ENCODE measurements at regions of chr12 and their contacts with region 1.

Region 1: GRCh38 chr12:121240484-121241101 is 30.7 kb downstream of the P2RX4 start:
- DNase-seq: peak; percentile 84 to 99 (median 92)
- ATAC-seq: peak; percentile 92
- H3K4me3 ChIP-seq: peak overlapping the region; percentile 47
- H3K4me3 Mint-ChIP-seq: peak overlapping the region; percentile 90
- H3K27ac ChIP-seq: peak overlapping the region; percentile 86 to 88
- H3K27ac Mint-ChIP-seq: peak overlapping the region; percentile 100
- H3K4me1 ChIP-seq: peaks cover 45% of the 10 kb centered on the region
- H3K4me1 Mint-ChIP-seq: peaks cover 51% of the 10 kb centered on the region
- H3K27me3 ChIP-seq: no peaks in the 10 kb centered on the region
- H3K27me3 Mint-ChIP-seq: no peaks in the 10 kb centered on the region
- CTCF ChIP-seq: no peak

Region 2: DNA sequence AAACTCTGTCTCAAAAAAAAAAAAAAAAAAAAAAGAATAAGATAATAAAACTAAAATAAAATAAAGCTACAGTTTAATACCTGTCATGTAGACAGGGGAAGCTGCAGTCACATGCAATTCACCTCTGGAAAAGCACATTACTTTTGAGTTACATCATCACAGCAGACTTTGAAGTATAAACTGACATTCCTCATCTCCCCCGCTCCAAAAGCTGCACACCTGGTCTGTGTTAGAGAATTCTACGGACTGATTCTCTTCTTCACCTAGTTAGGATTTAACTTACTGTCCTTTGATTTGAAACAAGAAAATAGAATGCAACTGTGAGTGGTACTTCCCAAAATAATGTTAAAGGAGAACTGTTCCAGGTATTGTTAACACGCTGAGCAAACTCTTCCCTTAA is 361.5 kb before region 1 on chr12:
- CTCF ChIA-PET with region 1: no interaction called
- POLR2A ChIA-PET with region 1: no interaction called
- intact Hi-C with region 1: no loop called
- DNase-seq: no peak
- ATAC-seq: no peak
- H3K4me3 ChIP-seq: no peak overlapping the region
- H3K4me3 Mint-ChIP-seq: no peak overlapping the region
- H3K27ac ChIP-seq: no peak overlapping the region
- H3K27ac Mint-ChIP-seq: peak overlapping the region; percentile 13
- H3K4me1 ChIP-seq: peaks cover 4% of the 10 kb centered on the region
- H3K4me1 Mint-ChIP-seq: peaks cover 65% of the 10 kb centered on the region
- H3K27me3 ChIP-seq: no peaks in the 10 kb centered on the region
- H3K27me3 Mint-ChIP-seq: no peaks in the 10 kb centered on the region
- CTCF ChIP-seq: no peak

Region 3: DNA sequence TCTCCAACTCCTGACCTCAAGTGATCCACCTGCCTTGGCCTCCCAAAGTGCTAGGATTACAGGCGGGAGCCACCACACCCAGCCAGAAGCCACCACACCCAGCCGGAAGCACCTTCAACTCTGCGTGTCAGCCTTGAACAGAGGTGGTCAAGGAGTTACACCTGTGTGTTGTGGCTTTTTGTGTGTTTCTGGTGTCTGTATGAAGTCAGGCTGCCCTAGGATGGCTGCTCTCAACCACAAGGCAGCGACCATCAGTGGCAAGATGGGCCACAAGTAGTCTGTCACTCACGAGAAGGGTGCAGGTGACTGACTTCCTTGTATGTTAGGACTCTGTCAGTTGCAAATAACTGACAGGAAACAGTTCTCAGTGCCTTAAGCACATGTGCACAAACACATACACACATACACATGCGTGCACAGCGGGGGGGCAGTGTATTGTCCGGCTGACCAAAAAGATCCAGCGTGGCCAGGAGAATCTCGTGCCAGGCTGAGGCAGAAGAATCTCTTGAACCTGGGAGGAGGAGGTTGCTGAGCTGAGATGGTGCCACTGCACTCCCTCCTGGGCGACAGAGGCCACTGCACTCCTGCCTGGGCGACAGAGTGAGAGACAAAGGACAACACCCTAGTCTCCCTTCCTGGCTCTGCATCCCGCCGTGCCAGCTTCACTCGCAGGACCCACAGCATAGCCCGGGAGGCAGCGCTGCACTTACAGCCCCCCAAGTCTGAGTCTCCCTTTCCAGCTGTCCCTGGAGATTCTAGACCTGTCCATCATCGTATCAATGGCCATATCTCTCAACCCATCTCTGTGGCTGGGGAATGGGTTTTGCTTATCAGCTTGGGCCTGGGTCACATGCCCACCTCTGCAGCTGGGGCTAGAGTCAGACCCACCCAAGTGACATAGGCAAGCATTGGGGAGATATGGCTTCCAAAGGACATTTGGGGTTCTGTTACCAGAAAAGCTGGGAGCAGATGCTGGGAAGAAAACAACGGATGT is 17.0 kb before region 1 on chr12:
- CTCF ChIA-PET with region 1: interaction called, 3 read pairs
- POLR2A ChIA-PET with region 1: interaction called, 43 read pairs
- intact Hi-C with region 1: loop called in 1 of 2 experiments (anchors 2 kb)
- DNase-seq: peak in 10 of 14 experiments; percentile 23 to 72 (median 46)
- ATAC-seq: peak; percentile 53
- H3K4me3 ChIP-seq: no peak overlapping the region
- H3K4me3 Mint-ChIP-seq: peak overlapping the region; percentile 55
- H3K27ac ChIP-seq: peak overlapping the region; percentile 48 to 79
- H3K27ac Mint-ChIP-seq: peak overlapping the region; percentile 88
- H3K4me1 ChIP-seq: peaks cover 58% of the 10 kb centered on the region
- H3K4me1 Mint-ChIP-seq: peaks cover 47% of the 10 kb centered on the region
- H3K27me3 ChIP-seq: no peaks in the 10 kb centered on the region
- H3K27me3 Mint-ChIP-seq: no peaks in the 10 kb centered on the region
- CTCF ChIP-seq: no peak

Region 4: GRCh38 chr12:121230538-121230907 is 10.1 kb before region 1 on chr12:
- CTCF ChIA-PET with region 1: interaction called, 18 read pairs
- POLR2A ChIA-PET with region 1: interaction called, 8 read pairs
- intact Hi-C with region 1: loop called in 1 of 2 experiments (anchors 2 kb)
- DNase-seq: no peak
- ATAC-seq: no peak
- H3K4me3 ChIP-seq: no peak overlapping the region
- H3K4me3 Mint-ChIP-seq: no peak overlapping the region
- H3K27ac ChIP-seq: no peak overlapping the region
- H3K27ac Mint-ChIP-seq: peak overlapping the region; percentile 55
- H3K4me1 ChIP-seq: peaks cover 37% of the 10 kb centered on the region
- H3K4me1 Mint-ChIP-seq: peaks cover 22% of the 10 kb centered on the region
- H3K27me3 ChIP-seq: no peaks in the 10 kb centered on the region
- H3K27me3 Mint-ChIP-seq: no peaks in the 10 kb centered on the region
- CTCF ChIP-seq: no peak

Region 5: GRCh38 chr12:121296618-121297434 is 56.2 kb after region 1 on chr12 and contains the start of gene CAMKK2:
- CTCF ChIA-PET with region 1: no interaction called
- POLR2A ChIA-PET with region 1: interaction called, 11 read pairs
- intact Hi-C with region 1: loop called in 1 of 2 experiments (anchors 1 kb)
- DNase-seq: peak; percentile 73 to 96 (median 84)
- ATAC-seq: peak; percentile 88
- H3K4me3 ChIP-seq: peak within 1 kb of the TSS; percentile 83
- H3K4me3 Mint-ChIP-seq: peak within 1 kb of the TSS; percentile 92
- H3K27ac ChIP-seq: no peak within 1 kb of the TSS
- H3K27ac Mint-ChIP-seq: peak within 1 kb of the TSS; percentile 75
- H3K4me1 ChIP-seq: peaks cover 37% of the 10 kb centered on the region
- H3K4me1 Mint-ChIP-seq: peaks cover 13% of the 10 kb centered on the region
- H3K27me3 ChIP-seq: no peaks in the 10 kb centered on the region
- H3K27me3 Mint-ChIP-seq: no peaks in the 10 kb centered on the region
- CTCF ChIP-seq: peak; percentile 26
- total RNA-seq, gene CAMKK2: 6.7 to 6.8 TPM

Region 6: DNA sequence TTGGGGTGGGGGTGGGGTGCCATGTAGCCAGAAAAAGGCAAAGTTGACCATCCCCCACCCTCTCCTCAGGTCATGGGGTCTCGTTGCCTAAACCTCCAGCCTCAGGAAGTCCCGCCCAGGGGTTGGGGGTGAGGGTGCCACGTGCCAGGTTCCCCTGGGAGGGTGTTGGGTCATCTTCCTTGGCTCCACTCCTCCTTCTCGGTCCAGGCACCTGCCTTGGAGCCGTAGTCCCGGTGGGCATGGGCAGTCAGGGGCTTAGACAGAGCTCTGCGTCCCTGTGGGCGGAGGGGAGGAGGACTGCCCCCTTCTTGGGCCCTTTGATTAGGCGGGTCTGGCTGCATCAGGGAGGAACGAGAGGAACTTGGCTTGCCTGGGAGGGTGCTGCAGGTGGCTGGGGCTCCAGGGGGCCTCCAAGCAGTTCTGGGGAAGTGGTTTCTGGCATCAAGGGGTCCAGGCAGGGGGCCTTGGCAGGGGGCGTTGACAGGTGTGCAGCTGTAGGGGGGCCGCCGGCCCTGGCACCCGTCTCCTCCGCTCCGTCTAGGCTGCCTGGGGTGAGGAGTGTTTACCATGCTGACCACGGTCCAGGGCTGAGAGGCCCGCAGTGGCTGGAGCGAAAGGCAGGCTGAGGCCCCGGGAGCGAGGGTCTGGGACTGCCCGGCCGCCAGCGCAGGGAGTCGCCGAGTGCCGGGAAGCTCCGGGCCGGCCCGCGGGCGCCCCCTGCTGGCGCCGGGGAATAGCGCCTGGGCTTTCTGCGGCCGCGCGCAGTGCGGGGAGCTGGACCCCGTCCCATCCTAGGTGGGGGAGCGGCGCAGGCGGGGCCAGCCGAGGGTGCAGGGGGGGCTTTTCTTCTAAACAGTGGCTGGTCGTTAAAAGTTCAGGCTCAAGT is 571.1 kb after region 1 on chr12:
- CTCF ChIA-PET with region 1: no interaction called
- POLR2A ChIA-PET with region 1: no interaction called
- intact Hi-C with region 1: no loop called
- DNase-seq: peak in 13 of 14 experiments; percentile 33 to 85 (median 66)
- ATAC-seq: peak; percentile 69
- H3K4me3 ChIP-seq: peak overlapping the region; percentile 64
- H3K4me3 Mint-ChIP-seq: peak overlapping the region; percentile 79
- H3K27ac ChIP-seq: peak overlapping the region; percentile 1 to 44
- H3K27ac Mint-ChIP-seq: peak overlapping the region; percentile 75
- H3K4me1 ChIP-seq: peaks cover 74% of the 10 kb centered on the region
- H3K4me1 Mint-ChIP-seq: peaks cover 58% of the 10 kb centered on the region
- H3K27me3 ChIP-seq: no peaks in the 10 kb centered on the region
- H3K27me3 Mint-ChIP-seq: no peaks in the 10 kb centered on the region
- CTCF ChIP-seq: peak; percentile 97

Measured in CD4-positive, alpha-beta T cell (primary cell).